ENCODE measurements at regions of chr6 and their contacts with region 1.

Region 1: DNA sequence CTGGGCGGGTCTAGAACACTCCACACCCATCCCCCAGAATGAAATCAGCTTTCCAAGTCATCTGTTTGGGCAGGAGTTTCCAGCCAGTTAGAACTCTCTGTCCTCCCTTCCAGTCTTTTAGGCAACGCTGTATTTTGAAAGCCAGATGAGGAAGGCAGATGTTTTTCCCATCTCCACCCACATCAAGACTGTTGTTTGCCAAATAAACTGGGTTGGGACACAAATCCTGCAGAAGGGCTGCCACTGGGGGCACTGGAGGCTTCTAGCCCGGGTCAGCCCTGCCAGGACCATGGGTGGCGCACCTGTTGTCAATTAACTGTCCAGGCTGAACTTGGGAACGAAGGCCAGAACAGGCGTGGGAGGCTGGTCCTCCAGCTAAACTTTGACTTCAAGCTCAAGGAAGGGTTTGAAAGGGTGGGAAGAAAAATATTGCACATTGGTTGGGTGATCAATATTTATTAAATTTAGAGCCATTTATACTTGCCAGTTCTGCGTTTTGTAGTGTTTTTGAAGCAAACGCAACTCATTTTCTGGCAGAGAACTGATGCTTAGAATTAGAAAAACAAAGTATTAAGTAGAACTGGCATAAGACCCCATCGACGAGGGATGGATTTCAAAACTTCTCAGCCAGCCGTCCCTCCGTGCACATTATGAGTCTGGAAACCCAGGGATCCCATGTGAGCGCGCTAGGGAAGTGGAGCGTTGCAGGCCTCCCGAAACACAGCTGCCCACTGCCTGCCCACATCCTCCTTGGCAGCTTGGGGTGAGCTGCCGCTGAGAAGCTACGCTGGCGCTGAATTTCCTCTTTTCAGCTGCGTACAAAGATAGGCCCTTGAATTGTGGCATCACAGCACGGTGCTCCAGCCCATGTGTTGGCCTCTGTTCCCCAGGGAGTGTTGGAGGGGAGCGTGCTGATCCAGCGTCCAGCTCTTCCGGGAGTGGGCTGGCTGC is 297.4 kb downstream of the QKI start:
- DNase-seq: peak; percentile 89
- H3K4me3 ChIP-seq: no peak overlapping the region
- H3K27ac ChIP-seq: peak overlapping the region; percentile 91
- H3K4me1 ChIP-seq: peaks cover 62% of the 10 kb centered on the region
- H3K27me3 ChIP-seq: no peaks in the 10 kb centered on the region
- CTCF ChIP-seq: peak; percentile 60

Region 2: GRCh38 chr6:163438940-163439335 is 273.0 kb before region 1 on chr6:
- intact Hi-C with region 1: loop called (anchors 10 kb)
- DNase-seq: peak; percentile 50
- H3K4me3 ChIP-seq: peak overlapping the region; percentile 4
- H3K27ac ChIP-seq: peak overlapping the region; percentile 14
- H3K4me1 ChIP-seq: peaks cover 99% of the 10 kb centered on the region
- H3K27me3 ChIP-seq: no peaks in the 10 kb centered on the region
- CTCF ChIP-seq: no peak

Region 3: GRCh38 chr6:164085091-164086075 is 373.5 kb after region 1 on chr6:
- intact Hi-C with region 1: no loop called
- DNase-seq: peak; percentile 87
- H3K4me3 ChIP-seq: peak overlapping the region; percentile 53
- H3K27ac ChIP-seq: peak overlapping the region; percentile 91
- H3K4me1 ChIP-seq: peaks cover 27% of the 10 kb centered on the region
- H3K27me3 ChIP-seq: no peaks in the 10 kb centered on the region
- CTCF ChIP-seq: no peak